Transverse colon (tissue), 4 donors: ENCODE measurements at regions of chr4 and their contacts with region 1.

Region 1: GRCh38 chr4:134862116-134862515 is 660.5 kb upstream of the PABPC4L start:
- DNase-seq: no peak
- H3K4me3 ChIP-seq: no peak overlapping the region
- H3K27ac ChIP-seq: no peak overlapping the region
- H3K4me1 ChIP-seq: no peaks in the 10 kb centered on the region
- H3K27me3 ChIP-seq: no peaks in the 10 kb centered on the region
- CTCF ChIP-seq: no peak
- EP300 ChIP-seq: no peak
- POLR2A ChIP-seq: no peak

Region 2: DNA sequence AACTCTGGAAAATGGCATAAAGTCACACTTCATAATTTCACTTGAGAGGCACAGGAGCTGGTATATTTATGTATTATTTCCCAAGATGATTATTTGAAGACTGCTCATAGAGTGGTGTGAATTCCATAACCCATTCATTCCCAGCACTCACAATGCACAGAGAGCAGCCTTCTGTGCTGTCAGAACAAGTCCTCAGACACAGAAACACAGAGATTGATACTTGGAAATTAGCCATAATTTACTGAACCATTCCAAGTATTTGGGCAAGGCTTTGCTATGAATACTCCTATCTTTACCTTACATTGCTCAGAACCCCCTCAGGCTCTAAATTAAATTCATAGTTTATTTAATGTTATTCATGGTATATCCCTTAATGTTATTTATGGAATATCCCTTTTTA is 714.2 kb before region 1 on chr4:
- in situ Hi-C with region 1: no loop called
- intact Hi-C with region 1: loop called (anchors 5 kb)
- DNase-seq: no peak
- H3K4me3 ChIP-seq: no peak overlapping the region
- H3K27ac ChIP-seq: no peak overlapping the region
- H3K4me1 ChIP-seq: no peaks in the 10 kb centered on the region
- H3K27me3 ChIP-seq: no peaks in the 10 kb centered on the region
- CTCF ChIP-seq: no peak
- EP300 ChIP-seq: no peak
- POLR2A ChIP-seq: no peak

Region 3: GRCh38 chr4:134546279-134546678 is 315.8 kb before region 1 on chr4:
- in situ Hi-C with region 1: no loop called
- intact Hi-C with region 1: no loop called
- DNase-seq: no peak
- H3K4me3 ChIP-seq: no peak overlapping the region
- H3K27ac ChIP-seq: no peak overlapping the region
- H3K4me1 ChIP-seq: no peaks in the 10 kb centered on the region
- H3K27me3 ChIP-seq: no peaks in the 10 kb centered on the region
- CTCF ChIP-seq: no peak
- EP300 ChIP-seq: no peak
- POLR2A ChIP-seq: no peak

Region 4: DNA sequence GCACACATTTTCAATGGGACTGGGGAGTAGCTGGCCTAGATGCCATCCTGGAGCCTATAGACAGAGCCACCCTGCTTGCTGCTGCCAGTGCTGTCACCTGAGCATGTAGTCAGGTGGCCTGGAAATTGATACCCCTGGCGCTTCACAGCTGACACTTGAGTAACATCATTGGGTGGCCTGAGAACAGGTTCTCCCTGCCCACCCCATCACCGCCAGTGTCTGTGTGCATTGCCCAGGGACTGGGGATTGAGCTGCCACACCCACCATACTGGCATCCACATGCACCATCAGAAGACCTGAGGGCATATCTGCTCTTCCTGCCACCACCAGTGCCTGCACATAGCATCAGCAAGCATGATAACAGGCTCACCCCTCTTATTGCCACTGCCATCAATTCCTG is 482.4 kb after region 1 on chr4:
- in situ Hi-C with region 1: no loop called
- intact Hi-C with region 1: loop called (anchors 5 kb)
- DNase-seq: no peak
- H3K4me3 ChIP-seq: no peak overlapping the region
- H3K27ac ChIP-seq: no peak overlapping the region
- H3K4me1 ChIP-seq: no peaks in the 10 kb centered on the region
- H3K27me3 ChIP-seq: no peaks in the 10 kb centered on the region
- CTCF ChIP-seq: no peak
- EP300 ChIP-seq: no peak
- POLR2A ChIP-seq: no peak